Spleen (tissue), 13 donors: ENCODE measurements at regions of chr6 and their contacts with region 1.

Region 1: GRCh38 chr6:73520688-73521350 is at the start of gene EEF1A1:
- DNase-seq: peak; percentile 100
- H3K4me3 ChIP-seq: peak within 1 kb of the TSS; percentile 70 to 94 (median 80)
- H3K27ac ChIP-seq: peak within 1 kb of the TSS; percentile 97 to 100 (median 98)
- H3K4me1 ChIP-seq: peaks cover 44 to 68% (median 60%) of the 10 kb centered on the region in 6 donors
- H3K27me3 ChIP-seq: no peaks in the 10 kb centered on the region
- CTCF ChIP-seq: peak in 3 of 11 experiments; percentile 11 to 24 (median 22)
- POLR2A ChIP-seq: peak; percentile 97 to 99 (median 98)
- total RNA-seq, gene EEF1A1: 7,486 to 10,079 (median 8,893) TPM

Region 2: GRCh38 chr6:73262671-73263569 is 257.9 kb before region 1 on chr6 and contains the start of gene KHDC1:
- intact Hi-C with region 1: no loop called
- DNase-seq: peak; percentile 90
- H3K4me3 ChIP-seq: peak within 1 kb of the TSS; percentile 53 to 86 (median 62)
- H3K27ac ChIP-seq: peak within 1 kb of the TSS; percentile 29 to 85 (median 64)
- H3K4me1 ChIP-seq: peaks cover 5 to 25% (median 17%) of the 10 kb centered on the region in 6 donors
- H3K27me3 ChIP-seq: no peaks in the 10 kb centered on the region
- CTCF ChIP-seq: no peak
- POLR2A ChIP-seq: no peak
- total RNA-seq, gene KHDC1: 0.54 to 2.2 (median 0.86) TPM

Region 3: DNA sequence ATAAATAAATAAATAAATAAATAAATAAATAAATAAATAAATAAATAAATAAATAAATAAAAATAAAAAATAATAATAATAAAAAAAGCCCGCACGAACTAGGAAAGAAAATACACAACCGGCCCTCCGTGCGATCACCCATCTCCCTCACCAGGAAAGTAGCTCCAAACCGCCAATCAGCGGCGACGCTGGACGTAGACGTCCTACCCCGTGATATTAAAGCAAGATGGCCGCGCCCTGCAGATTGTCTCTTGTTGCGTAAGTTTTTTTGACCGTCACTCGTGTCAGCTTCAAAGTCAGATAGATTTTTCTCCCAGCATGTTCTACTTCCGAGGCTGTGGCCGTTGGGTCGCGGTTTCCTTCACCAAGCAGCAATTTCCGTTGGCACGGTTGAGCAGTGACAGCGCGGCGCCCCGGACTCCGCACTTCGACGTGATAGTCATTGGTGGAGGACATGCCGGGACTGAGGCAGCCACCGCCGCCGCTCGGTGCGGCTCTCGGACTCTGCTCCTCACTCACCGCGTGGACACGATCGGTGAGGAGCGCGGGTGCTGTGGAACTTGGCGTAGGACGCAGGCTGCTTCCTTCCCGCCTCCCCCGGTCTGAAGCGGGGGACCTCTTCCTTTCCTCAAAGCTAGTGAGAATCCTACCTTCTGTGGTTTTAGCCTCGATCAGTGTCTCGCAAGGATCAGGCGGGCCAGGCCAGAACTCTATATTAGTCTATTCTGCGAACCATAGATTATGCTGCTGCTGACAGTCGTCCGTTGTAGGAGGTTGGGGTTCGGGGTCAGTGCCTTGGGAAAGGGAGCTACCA is 59.1 kb before region 1 on chr6 and contains the start of gene MTO1:
- intact Hi-C with region 1: loop called (anchors 10 kb)
- DNase-seq: peak; percentile 97
- H3K4me3 ChIP-seq: peak within 1 kb of the TSS; percentile 73 to 99 (median 90)
- H3K27ac ChIP-seq: peak within 1 kb of the TSS; percentile 95 to 98 (median 98)
- H3K4me1 ChIP-seq: peaks cover 0 to 74% (median 52%) of the 10 kb centered on the region in 6 donors
- H3K27me3 ChIP-seq: no peaks in the 10 kb centered on the region
- CTCF ChIP-seq: no peak
- POLR2A ChIP-seq: no peak
- total RNA-seq, gene MTO1: 31.7 to 50.2 (median 45.3) TPM

Region 4: GRCh38 chr6:73580247-73581149 is 59.7 kb after region 1 on chr6:
- intact Hi-C with region 1: loop called (anchors 10 kb)
- DNase-seq: peak; percentile 87
- H3K4me3 ChIP-seq: peak overlapping the region in 5 of 8 donors; percentile 2 to 47 (median 15)
- H3K27ac ChIP-seq: peak overlapping the region; percentile 16 to 94 (median 89)
- H3K4me1 ChIP-seq: peaks cover 10 to 44% (median 35%) of the 10 kb centered on the region in 6 donors
- H3K27me3 ChIP-seq: no peaks in the 10 kb centered on the region
- CTCF ChIP-seq: peak in 7 of 11 experiments; percentile 13 to 49 (median 32)
- POLR2A ChIP-seq: peak in 1 of 3 donors; percentile 1